Panc1 (cell line): ENCODE measurements at regions of chr9 and their contacts with region 1.

Region 1: DNA sequence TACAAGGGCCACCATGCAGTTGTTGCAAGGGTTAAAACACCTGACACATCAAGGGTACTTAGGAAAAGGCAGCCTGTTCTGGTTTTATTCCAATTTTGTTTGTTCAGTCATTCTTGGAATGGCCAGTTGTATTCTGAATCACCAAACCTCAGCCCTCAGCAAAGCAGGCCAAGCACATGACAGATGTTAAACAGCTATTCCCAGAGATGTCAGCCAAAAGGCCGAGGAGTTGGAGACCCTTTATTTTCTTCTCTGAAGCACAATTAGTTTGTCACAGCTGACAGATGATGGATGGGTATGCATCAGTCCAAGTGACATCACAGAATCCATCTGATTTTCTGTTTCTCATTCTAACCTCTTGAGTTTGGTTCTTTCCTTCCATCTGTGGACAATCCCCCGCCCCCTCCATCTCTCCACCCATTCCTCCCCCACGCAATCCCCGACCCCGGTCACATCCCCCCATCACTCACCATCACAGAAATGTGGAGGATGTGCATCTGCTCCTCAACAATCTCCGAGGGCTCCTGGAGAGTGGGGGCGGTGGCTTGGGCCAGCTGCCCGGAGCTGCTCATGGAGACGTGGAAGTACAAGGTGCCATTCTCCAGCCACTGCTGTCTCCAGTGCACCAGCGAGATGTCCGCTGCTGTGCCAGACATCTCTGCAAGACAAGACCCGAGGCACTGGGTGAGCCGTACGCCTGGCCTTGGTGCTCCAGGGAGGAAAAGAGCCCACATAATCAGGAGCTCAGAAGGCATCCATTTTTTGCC is 123.8 kb downstream of the ASTN2 start:
- DNase-seq: no peak
- ATAC-seq: no peak
- H3K4me3 ChIP-seq: no peak overlapping the region
- H3K27ac ChIP-seq: no peak overlapping the region
- H3K4me1 ChIP-seq: no peaks in the 10 kb centered on the region
- H3K27me3 ChIP-seq: no peaks in the 10 kb centered on the region
- CTCF ChIP-seq: no peak

Region 2: DNA sequence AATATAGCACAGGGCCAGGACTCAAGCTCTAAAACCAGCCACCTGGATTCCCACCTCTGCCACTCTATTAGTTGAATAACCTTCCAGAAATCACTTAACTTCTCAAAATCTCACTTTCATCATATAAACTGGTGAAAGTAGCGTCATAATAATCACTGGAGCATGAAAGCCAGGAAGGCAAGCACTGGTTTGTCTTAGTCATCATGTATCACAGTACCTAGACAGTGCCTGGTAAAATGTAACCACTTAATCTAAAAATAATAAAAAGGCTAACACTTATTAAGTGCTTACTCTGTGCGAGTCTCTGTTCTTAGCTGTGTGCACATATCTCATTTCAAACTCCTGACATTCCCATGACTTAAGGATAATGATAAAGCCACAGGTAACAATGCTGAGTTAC is 14.4 kb after region 1 on chr9:
- CTCF ChIA-PET with region 1: no interaction called
- POLR2A ChIA-PET with region 1: no interaction called
- in situ Hi-C with region 1: no loop called
- intact Hi-C with region 1: loop called (anchors 1 kb)
- DNase-seq: no peak
- ATAC-seq: no peak
- H3K4me3 ChIP-seq: no peak overlapping the region
- H3K27ac ChIP-seq: no peak overlapping the region
- H3K4me1 ChIP-seq: no peaks in the 10 kb centered on the region
- H3K27me3 ChIP-seq: no peaks in the 10 kb centered on the region
- CTCF ChIP-seq: no peak